Psoas muscle (tissue), 8 donors: ENCODE measurements at regions of chr6 and their contacts with region 1.

Region 1: DNA sequence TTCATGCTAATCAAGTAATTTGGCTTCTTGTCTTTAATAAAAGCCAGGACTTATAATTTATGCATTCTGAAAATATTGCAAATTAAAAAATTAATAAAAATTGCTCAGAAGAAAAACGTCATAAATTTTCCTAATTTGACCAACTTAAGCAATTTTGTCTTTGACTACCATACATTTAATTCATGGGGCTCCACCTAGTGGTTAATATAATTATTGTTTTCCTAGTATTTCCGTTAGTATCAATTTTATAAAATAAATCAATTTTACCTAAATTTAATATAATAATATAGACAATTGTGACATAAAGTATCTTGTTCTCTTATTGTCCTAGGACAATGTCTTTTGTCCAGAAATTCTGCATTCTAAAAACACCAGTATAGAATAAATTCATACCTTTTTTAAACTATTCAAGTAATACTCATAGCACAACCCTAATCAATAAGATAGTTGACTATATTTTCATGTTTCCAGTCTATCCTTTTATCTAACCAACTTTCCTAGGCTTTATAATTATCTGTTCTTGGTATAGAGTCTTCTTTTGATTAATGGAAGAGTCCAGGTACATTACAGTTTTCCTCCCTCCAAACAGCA is 319.9 kb downstream of the TRDN start:
- DNase-seq: no peak
- ATAC-seq: no peak
- H3K4me3 ChIP-seq: no peak overlapping the region
- H3K27ac ChIP-seq: no peak overlapping the region
- H3K4me1 ChIP-seq: no peaks in the 10 kb centered on the region
- H3K27me3 ChIP-seq: no peaks in the 10 kb centered on the region
- CTCF ChIP-seq: peak; percentile 61

Region 2: DNA sequence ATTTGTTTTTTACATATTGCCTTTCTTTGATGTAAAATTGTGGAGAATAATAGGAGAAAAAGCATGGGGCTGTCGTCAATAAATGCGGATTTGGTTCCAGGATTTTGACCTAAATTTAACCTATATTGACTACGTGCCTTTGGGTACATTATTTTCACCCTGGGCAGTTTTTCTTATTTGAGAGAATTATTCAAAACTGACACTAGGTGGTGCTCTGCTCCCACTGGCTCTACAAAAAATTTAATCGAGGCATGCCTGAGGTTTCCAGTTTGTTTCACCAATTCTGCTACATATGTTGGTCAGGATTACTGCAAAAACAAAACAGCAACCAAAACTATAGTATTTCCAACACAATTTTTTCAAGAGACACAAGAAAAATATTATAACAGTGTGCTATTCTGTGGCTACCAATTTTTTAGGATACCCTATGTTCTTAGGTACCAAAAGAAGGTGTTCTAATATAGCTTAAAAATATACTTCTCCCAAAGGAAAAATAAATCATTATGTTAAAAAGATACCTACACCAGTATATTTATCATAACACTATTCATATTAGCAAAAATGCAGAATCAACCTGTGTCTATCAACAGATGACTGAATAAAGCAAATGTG is 585.9 kb before region 1 on chr6:
- intact Hi-C with region 1: loop called in 1 of 2 experiments (anchors 10 kb)
- DNase-seq: no peak
- ATAC-seq: peak; percentile 57 to 83 (median 66)
- H3K4me3 ChIP-seq: no peak overlapping the region
- H3K27ac ChIP-seq: no peak overlapping the region
- H3K4me1 ChIP-seq: peaks cover 5% of the 10 kb centered on the region
- H3K27me3 ChIP-seq: no peaks in the 10 kb centered on the region
- CTCF ChIP-seq: peak; percentile 87

Region 3: GRCh38 chr6:122869437-122870024 is 447.3 kb before region 1 on chr6:
- intact Hi-C with region 1: loop called (anchors 5 kb)
- DNase-seq: no peak
- ATAC-seq: peak; percentile 90 to 99 (median 91)
- H3K4me3 ChIP-seq: no peak overlapping the region
- H3K27ac ChIP-seq: no peak overlapping the region
- H3K4me1 ChIP-seq: no peaks in the 10 kb centered on the region
- H3K27me3 ChIP-seq: no peaks in the 10 kb centered on the region
- CTCF ChIP-seq: peak; percentile 77